Right ventricle myocardium inferior (tissue), 1 donor: ENCODE measurements at regions of chr11 and their contacts with region 1.

Region 1: DNA sequence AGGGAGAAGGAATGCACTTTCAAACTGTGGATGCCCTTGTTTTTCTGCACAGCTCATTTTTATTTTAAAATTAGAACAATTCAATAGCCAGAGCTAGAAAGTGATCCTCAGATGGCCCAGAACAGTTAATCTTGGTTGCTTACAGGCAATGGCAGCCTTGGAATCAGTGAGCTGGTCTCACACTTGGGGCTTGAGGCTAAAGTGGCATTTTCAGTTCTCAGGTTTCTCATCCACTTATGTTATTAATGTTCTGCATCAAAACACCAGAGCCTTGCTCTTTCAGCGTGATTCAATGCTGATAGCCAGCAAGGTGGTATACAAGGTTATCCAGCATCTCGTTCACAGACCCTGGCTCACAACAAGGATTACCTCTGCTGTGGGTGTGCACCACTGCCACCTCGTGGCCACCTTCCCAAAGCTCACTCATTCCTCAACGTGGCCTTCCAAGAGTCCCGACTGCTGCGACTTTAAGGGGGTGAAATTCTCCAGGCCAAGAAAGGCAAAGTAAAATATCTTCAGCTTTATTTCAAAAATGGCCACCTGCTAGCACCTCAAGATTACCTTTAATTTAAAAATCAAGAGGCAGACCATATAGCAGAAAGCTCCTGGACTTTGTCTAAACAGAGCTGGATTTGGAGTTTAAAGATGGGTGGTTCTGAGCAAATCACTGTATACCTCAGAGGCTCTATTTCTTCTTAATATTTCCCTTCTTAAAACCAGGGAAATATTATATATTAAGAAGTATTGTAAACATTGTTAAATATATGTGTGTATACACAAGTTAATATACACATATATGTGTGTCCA is 34.2 kb upstream of the FSHB start:
- DNase-seq: peak; percentile 62
- ATAC-seq: peak; percentile 63

Region 2: DNA sequence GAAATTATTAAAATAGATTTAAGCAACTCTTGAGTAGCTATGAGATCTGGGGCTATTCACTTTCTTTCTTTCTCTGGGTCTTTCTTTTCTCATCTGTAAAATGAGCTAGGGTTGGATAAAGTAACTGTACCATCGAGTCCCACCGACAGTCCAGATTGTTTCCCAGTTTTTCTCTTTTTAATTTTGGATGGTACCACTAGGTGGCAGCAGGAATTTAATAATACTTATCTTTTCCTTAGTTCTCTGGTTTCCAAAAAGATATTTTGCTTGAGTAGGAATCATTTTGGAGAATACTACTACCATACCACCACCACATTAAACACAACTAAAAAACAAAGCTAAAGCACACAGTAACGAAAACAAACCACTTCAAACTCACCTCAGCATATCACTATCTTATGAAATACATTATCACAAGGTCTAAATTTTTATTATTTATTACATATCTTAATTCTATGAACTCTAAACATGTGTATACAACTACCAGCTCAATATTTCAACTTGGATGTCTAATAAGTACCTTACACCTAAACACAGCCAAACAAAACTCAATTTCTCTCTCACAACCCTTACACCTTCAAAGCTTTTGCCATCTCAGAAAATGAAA is 763.8 kb before region 1 on chr11:
- intact Hi-C with region 1: loop called (anchors 5 kb)
- DNase-seq: no peak
- ATAC-seq: no peak

Region 3: DNA sequence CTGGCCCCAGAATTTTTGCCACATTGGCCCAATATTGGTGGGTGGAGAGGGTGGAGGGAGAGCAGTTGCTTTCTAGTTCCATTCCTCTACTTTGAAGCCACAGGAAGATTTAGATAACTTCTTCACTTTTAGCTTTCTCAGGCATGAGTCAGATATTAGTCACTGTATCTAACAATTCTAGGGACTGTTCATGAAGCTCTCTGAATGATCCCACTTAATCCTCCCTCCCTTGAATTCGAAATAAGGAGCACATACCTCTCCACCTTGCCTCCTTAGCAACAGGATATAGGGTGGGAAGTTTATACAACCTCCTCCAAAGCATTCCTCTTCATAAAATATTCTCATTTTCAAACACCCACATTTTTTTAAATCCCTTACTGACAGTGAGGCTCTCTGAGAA is 47.7 kb after region 1 on chr11:
- intact Hi-C with region 1: no loop called
- DNase-seq: no peak
- ATAC-seq: no peak